Kidney (tissue), 22 donors: ENCODE measurements at regions of chr16 and their contacts with region 1.

Region 1: DNA sequence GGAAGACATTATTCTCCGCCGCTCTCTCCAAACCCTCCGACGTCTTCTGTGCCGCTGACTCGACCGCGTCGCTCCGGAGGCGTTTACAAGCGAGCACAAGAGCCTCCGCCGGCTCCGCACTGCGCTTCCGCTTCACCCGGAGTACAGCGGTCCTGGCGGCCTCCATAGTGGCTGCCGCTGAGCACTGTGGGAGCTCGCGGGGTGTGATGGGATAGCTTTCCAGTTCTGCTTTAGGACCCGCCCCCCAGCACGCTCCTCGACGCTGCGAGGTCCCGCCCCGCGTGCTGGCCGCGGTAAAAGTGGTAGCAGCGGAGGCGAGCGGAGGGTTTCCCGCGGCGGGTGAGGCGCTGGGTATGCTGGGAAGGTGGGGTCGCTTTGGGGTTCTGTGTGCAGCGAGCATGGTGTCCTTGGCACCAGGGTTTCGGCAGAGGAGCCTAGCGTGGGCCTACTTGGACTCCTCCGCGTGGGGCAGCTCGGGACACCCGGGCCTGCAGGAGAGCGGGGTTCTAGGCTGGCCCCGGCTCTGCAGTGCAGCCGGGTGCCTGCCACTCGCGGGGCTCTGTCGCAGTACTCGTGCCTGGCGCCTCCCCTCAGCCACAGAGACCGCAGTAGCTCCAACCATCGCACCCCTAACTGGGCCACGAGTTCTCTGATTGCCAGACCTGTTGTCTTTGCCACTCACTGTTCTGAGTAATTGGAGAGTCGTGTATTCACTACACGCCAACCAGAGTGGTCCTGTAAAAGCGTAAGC is at the starts of genes PRMT7 and SLC7A6OS:
- DNase-seq: peak; percentile 92 to 97 (median 95)
- H3K4me3 ChIP-seq: peak within 1 kb of the TSS; percentile 94 to 99 (median 98)
- H3K27ac ChIP-seq: peak within 1 kb of the TSS; percentile 57 to 82
- H3K4me1 ChIP-seq: peaks cover 0 to 13% (median 7%) of the 10 kb centered on the region in 3 donors
- H3K27me3 ChIP-seq: no peaks in the 10 kb centered on the region
- CTCF ChIP-seq: peak; percentile 14
- total RNA-seq, gene PRMT7: 33.7 TPM
- total RNA-seq, gene SLC7A6OS: 20.3 TPM

Region 2: DNA sequence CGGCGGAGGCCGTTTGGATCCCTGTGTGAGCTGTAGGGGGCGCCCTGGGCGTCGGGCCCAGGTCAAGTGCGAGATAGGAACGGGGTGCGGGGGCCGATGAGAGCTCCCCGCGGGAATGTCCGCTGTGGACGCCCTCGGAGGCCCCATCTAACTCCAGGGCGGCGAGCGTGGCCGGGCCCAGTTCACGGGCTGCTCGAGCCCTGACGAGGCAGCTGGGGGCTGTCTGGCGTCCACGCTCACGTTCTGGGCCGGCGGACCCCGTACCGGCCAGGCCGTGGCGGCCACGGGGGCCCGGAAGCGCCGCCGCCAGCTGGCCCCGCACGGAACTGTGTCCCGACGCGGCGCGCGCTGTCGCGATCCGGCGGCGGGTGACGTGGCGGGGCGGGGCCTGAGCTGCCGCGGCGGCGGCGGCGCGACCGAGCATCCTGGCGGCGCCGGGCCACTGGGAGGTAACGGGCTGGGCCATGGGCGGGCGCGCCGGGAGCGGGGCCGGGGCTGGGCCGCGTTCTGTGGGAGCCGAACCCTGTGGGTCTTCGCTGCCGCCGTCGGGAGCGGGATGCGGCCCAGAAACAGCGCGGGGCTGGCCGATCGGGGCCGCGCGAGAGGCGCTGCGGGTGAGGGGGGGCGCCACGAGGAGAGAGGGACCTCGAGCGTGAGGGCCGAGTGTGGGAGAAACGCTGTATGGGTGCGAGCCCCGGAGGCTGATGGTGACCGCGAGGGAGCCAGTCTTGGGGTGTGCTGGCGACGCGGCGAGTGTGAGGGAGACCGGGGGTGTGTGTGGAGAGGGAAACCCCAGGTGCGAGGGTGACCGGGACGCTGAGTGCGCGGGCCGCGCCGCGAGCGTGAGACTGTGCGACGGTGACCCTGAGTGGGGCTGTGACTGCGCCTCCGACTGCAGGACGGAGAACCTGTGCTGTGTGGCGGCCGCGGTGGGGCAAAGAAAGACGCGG is 46.5 kb before region 1 on chr16 and contains the start of gene SLC7A6:
- intact Hi-C with region 1: loop called (anchors 10 kb)
- DNase-seq: peak; percentile 73 to 92 (median 80)
- H3K4me3 ChIP-seq: peak within 1 kb of the TSS; percentile 64 to 77 (median 65)
- H3K27ac ChIP-seq: peak within 1 kb of the TSS; percentile 92 to 96
- H3K4me1 ChIP-seq: peaks cover 0 to 27% (median 13%) of the 10 kb centered on the region in 3 donors
- H3K27me3 ChIP-seq: no peaks in the 10 kb centered on the region
- CTCF ChIP-seq: peak; percentile 53
- total RNA-seq, gene SLC7A6: 24.0 TPM